ENCODE measurements at regions of chr1 and their contacts with region 1.

Region 1: DNA sequence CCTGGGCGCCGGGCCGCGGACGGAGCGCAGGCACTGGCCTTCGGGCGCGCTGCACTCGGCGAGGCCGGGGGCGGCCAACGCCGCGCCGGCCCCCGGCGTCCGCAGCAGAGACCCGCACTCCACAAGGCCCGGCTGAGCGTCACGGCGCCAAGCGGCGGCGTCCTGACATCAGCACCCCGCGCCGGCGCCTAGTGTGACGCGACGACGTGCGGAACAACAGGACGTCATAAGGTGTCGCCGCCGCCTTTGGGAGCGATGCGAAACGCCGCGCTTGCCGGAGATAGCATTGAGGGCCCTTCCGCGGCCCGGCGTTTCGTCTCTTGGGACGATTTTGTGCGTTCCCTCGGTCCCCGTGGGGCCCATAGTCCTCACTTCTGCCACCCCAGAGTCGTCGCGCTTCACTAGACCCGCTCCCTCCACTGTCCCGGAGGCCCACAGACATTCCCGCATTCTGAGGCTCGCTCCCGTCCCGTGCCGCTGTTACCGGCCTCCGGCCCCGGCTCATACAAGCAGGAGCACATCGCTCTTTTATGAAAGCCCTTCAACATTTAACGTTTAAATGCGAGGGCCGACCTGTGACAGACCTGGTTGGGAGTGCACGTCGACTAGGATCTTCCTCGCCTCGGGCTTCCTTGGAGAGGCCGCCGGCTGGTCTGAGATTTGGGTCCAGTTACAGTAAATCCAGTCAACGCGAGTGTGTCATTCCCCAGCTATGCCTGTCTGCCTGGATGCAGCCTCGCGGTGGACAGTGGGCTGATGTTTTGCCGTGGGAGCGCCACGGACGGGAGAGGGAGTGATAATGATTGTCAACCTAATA is at the start of gene SSU72:
- DNase-seq: peak; percentile 84 to 96 (median 93)
- ATAC-seq: peak; percentile 82
- H3K4me3 ChIP-seq: peak within 1 kb of the TSS; percentile 78 to 92
- H3K4me3 Mint-ChIP-seq: peak within 1 kb of the TSS; percentile 98
- H3K27ac ChIP-seq: peak within 1 kb of the TSS; percentile 99 to 100
- H3K27ac Mint-ChIP-seq: peak within 1 kb of the TSS; percentile 100
- H3K4me1 ChIP-seq: peaks cover 39% of the 10 kb centered on the region
- H3K4me1 Mint-ChIP-seq: peaks cover 32% of the 10 kb centered on the region
- H3K27me3 ChIP-seq: no peaks in the 10 kb centered on the region
- H3K27me3 Mint-ChIP-seq: no peaks in the 10 kb centered on the region
- CTCF ChIP-seq: no peak
- total RNA-seq, gene SSU72: 86.8 to 87.9 TPM

Region 2: DNA sequence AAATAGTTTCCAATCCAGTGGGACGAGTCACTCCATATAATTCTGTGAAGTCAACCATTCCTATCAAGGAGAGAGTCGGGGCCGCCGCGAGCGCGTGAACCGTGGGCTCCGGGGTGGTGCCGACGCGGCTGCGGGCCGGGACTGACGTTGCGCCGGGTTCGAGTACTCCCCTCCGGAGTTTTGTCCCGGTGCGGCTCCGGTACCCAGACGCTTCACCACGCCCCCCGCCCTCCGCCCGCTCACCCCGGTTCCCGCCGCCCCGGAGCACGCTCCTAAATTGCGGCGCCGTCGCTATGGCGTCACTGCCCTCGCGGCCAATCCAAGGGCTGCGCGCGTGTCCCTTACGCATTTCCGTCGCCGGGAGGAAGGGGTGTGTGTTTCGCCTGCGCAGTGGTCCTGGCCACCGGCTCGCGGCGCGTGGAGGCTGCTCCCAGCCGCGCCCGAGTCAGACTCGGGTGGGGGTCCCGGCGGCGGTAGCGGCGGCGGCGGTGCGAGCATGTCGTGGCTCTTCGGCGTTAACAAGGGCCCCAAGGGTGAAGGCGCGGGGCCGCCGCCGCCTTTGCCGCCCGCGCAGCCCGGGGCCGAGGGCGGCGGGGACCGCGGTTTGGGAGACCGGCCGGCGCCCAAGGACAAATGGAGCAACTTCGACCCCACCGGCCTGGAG is 103.4 kb before region 1 on chr1 and contains the start of gene ATAD3B:
- CTCF ChIA-PET with region 1: no interaction called
- POLR2A ChIA-PET with region 1: no interaction called
- intact Hi-C with region 1: loop called in 1 of 2 experiments (anchors 2 kb)
- DNase-seq: peak; percentile 75 to 95 (median 90)
- ATAC-seq: peak; percentile 93
- H3K4me3 ChIP-seq: peak within 1 kb of the TSS; percentile 62 to 86
- H3K4me3 Mint-ChIP-seq: peak within 1 kb of the TSS; percentile 92
- H3K27ac ChIP-seq: peak within 1 kb of the TSS; percentile 81 to 89
- H3K27ac Mint-ChIP-seq: peak within 1 kb of the TSS; percentile 94
- H3K4me1 ChIP-seq: peaks cover 24% of the 10 kb centered on the region
- H3K4me1 Mint-ChIP-seq: peaks cover 24% of the 10 kb centered on the region
- H3K27me3 ChIP-seq: no peaks in the 10 kb centered on the region
- H3K27me3 Mint-ChIP-seq: no peaks in the 10 kb centered on the region
- CTCF ChIP-seq: no peak
- total RNA-seq, gene ATAD3B: 55.4 to 69.6 TPM

Region 3: DNA sequence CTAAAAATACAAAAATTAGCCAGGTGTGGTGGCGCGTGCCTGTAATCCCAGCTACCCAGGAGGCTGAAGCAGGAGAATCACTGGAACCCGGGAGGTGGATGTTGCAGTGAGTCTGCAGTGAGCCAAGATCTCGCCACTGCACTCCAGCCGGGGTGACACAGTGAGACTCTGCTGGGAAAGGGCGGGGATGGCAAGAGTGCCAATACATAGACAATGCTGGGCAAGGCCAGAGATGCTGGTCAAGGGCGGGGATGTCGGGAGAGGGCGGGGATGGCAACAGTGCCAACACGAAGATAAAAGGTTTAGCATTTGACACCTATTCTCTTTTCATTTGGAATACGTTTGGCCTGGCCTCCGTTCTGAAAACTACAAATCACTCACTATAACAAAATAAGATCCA is 11.2 kb before region 1 on chr1:
- CTCF ChIA-PET with region 1: no interaction called
- POLR2A ChIA-PET with region 1: no interaction called
- intact Hi-C with region 1: no loop called
- DNase-seq: no peak
- ATAC-seq: no peak
- H3K4me3 ChIP-seq: no peak overlapping the region
- H3K4me3 Mint-ChIP-seq: no peak overlapping the region
- H3K27ac ChIP-seq: no peak overlapping the region
- H3K27ac Mint-ChIP-seq: no peak overlapping the region
- H3K4me1 ChIP-seq: peaks cover 14% of the 10 kb centered on the region
- H3K4me1 Mint-ChIP-seq: peaks cover 26% of the 10 kb centered on the region
- H3K27me3 ChIP-seq: no peaks in the 10 kb centered on the region
- H3K27me3 Mint-ChIP-seq: no peaks in the 10 kb centered on the region
- CTCF ChIP-seq: no peak

Region 4: GRCh38 chr1:1605034-1605591 is 30.2 kb after region 1 on chr1:
- CTCF ChIA-PET with region 1: no interaction called
- POLR2A ChIA-PET with region 1: interaction called, 3 read pairs
- intact Hi-C with region 1: loop called in 1 of 2 experiments (anchors 2 kb)
- DNase-seq: peak in 2 of 9 experiments; percentile 18 to 25
- ATAC-seq: no peak
- H3K4me3 ChIP-seq: no peak overlapping the region
- H3K4me3 Mint-ChIP-seq: no peak overlapping the region
- H3K27ac ChIP-seq: no peak overlapping the region
- H3K27ac Mint-ChIP-seq: peak overlapping the region; percentile 49
- H3K4me1 ChIP-seq: peaks cover 18% of the 10 kb centered on the region
- H3K4me1 Mint-ChIP-seq: peaks cover 14% of the 10 kb centered on the region
- H3K27me3 ChIP-seq: no peaks in the 10 kb centered on the region
- H3K27me3 Mint-ChIP-seq: no peaks in the 10 kb centered on the region
- CTCF ChIP-seq: no peak

Region 5: GRCh38 chr1:1630271-1630964 is 55.5 kb after region 1 on chr1:
- CTCF ChIA-PET with region 1: no interaction called
- POLR2A ChIA-PET with region 1: interaction called, 11 read pairs
- intact Hi-C with region 1: loop called (anchors 2 kb)
- DNase-seq: peak; percentile 89 to 99 (median 93)
- ATAC-seq: peak; percentile 56
- H3K4me3 ChIP-seq: peak overlapping the region; percentile 45 to 53
- H3K4me3 Mint-ChIP-seq: peak overlapping the region; percentile 92
- H3K27ac ChIP-seq: peak overlapping the region; percentile 55 to 79
- H3K27ac Mint-ChIP-seq: peak overlapping the region; percentile 96
- H3K4me1 ChIP-seq: peaks cover 11% of the 10 kb centered on the region
- H3K4me1 Mint-ChIP-seq: peaks cover 10% of the 10 kb centered on the region
- H3K27me3 ChIP-seq: no peaks in the 10 kb centered on the region
- H3K27me3 Mint-ChIP-seq: no peaks in the 10 kb centered on the region
- CTCF ChIP-seq: no peak